ENCODE measurements at regions of chr19 and their contacts with region 1.

Region 1: GRCh38 chr19:50804420-50805272 is 14.4 kb downstream of the ACP4 start:
- DNase-seq: peak; percentile 98
- CTCF ChIP-seq: no peak

Region 2: DNA sequence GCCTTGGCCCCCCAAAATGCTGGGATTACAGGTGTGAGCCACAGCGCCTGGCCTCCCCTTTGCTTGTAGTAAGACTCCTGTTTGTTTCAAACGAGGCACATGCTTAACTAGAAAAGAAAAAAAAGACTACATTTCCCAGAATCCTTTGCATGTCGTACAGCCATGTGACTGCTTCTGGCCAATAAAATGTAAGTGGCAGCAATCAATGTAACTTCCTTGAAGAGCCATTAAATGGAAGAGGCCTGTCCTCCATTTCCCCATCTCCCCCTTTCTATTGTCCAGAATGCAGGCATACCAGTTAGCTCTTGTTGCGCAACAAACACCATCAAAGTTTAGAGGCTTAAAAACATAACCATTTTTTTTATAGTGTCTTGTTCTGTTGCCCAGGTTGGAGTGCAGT is 44.8 kb before region 1 on chr19:
- CTCF ChIA-PET with region 1: no interaction called
- POLR2A ChIA-PET with region 1: no interaction called
- DNase-seq: no peak
- CTCF ChIP-seq: no peak

Region 3: DNA sequence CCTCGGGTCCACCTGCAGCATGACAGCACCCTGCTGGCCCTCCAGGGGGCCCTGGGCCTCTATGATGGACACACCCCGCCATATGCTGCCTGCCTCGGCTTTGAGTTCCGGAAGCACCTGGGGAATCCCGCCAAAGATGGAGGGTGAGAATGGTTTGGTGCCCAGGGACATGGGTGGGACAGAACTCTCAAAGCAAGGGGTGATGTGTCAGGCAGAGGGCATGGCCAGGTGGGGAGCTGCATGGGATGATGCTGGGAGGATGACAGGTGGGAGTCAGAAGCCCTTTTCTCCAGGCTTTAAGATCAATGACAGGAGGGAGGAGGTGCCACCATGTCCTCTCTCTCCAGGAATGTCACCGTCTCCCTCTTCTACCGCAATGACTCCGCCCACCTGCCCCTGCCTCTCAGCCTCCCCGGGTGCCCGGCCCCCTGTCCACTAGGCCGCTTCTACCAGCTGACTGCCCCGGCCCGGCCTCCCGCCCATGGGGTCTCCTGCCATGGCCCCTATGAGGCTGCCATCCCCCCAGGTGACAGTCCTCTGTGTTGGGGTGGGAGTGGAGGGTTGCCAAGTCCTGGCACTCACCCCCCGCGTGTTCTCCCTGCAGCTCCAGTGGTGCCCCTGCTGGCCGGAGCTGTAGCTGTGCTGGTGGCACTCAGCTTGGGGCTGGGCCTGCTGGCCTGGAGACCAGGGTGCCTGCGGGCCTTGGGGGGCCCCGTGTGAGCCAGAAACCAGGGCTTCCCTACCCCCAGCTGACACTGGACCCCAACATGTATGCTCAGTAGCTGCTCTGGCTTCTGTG is 10.0 kb before region 1 on chr19:
- CTCF ChIA-PET with region 1: no interaction called
- POLR2A ChIA-PET with region 1: interaction called, 10 read pairs
- DNase-seq: peak; percentile 72
- CTCF ChIP-seq: peak; percentile 50

Region 4: DNA sequence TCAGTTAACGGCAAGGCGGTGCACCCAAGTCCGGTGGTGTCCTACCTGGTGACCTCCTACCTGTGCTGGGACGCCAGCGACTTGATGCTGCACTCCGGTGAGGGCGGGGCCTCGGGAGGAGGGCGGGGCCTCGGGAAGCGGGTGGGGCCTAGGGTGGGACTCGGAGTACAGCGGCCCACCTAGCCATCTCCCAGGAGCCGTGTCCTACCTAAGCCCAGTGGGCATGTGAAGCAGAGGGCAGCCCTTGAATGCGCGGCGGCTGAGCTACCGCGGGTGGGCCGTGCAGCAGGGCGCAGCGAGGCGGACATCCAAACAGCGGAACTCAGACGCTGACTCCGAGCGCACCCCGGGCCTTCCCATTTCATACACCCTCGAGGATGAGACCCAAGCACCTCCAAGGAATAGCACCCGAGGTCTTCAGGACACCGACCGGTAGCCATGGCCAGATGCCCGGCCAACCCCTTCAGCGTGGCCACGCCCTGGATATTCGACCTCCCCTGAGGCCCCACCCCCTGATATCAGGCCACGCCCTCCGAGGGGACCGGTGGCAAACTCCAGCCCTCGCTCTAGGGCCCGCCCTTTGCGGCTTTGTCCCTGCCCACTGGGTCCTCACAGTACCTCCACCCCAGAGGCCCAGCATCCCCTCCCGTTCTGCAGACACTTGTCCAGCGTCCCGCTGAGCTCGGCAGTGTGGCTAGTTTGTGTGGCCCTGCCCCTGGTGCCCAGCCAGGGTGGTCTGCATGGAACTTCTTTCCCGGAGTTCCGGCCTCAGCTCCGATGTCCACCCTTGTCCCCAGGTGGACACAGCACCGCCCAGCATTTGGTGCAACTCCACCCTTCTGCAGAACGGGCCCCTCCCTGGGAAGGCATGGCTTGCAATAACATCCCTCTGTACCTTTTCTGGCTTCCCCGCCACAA is 13.6 kb after region 1 on chr19:
- CTCF ChIA-PET with region 1: interaction called, 3 read pairs
- POLR2A ChIA-PET with region 1: interaction called, 13 read pairs
- DNase-seq: peak; percentile 92
- CTCF ChIP-seq: no peak